ENCODE measurements at regions of chr20 and their contacts with region 1.

Region 1: DNA sequence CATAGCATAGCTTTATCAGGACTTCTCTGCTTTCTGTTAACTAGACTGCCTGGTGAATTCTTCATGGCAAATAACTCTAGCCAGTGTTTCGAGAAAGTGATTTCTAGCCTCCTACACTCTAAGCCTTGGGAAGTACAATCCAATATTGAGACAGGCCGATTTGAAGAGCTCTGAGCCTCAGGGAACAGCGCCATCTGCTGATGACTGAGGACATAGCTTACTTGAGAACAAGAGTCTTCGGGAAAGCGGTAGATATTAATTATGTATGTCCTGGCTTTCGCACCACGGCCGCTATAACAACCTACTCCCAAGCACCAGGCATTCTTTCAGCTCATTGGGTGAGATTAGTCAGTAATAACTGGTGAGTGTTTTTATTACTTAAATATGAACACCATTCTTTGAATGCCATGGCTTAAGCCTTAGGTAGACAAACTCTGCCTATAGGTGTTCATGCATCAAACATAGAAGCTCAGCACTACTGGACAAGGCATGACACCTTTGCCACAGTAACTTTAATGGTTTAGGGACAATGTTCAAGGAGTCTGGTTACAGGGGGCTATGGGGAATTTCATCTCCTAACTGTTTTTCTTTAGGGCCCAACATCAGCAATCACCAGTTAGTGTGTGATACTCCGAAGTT is 518.6 kb downstream of the BMP2 start:
- DNase-seq: peak; percentile 12
- ATAC-seq: peak; percentile 96
- H3K4me3 ChIP-seq: no peak overlapping the region
- H3K27ac ChIP-seq: no peak overlapping the region
- H3K4me1 ChIP-seq: no peaks in the 10 kb centered on the region
- H3K27me3 ChIP-seq: no peaks in the 10 kb centered on the region
- CTCF ChIP-seq: peak; percentile 66 to 83 (median 74)
- EP300 ChIP-seq: no peak
- POLR2A ChIP-seq: no peak
- RAD21 ChIP-seq: peak; percentile 72

Region 2: GRCh38 chr20:6636209-6637159 is 649.6 kb before region 1 on chr20:
- CTCF ChIA-PET with region 1: interaction called, 12 read pairs
- POLR2A ChIA-PET with region 1: no interaction called
- RAD21 ChIA-PET with region 1: no interaction called
- SMC1A ChIA-PET with region 1: interaction called, 8 read pairs
- in situ Hi-C with region 1: no loop called
- intact Hi-C with region 1: no loop called
- DNase-seq: no peak
- ATAC-seq: peak; percentile 73
- H3K4me3 ChIP-seq: no peak overlapping the region
- H3K27ac ChIP-seq: no peak overlapping the region
- H3K4me1 ChIP-seq: no peaks in the 10 kb centered on the region
- H3K27me3 ChIP-seq: no peaks in the 10 kb centered on the region
- CTCF ChIP-seq: peak; percentile 24 to 54 (median 25); a peak in 3 of 6 replicates
- EP300 ChIP-seq: no peak
- POLR2A ChIP-seq: no peak
- RAD21 ChIP-seq: peak; percentile 36

Region 3: DNA sequence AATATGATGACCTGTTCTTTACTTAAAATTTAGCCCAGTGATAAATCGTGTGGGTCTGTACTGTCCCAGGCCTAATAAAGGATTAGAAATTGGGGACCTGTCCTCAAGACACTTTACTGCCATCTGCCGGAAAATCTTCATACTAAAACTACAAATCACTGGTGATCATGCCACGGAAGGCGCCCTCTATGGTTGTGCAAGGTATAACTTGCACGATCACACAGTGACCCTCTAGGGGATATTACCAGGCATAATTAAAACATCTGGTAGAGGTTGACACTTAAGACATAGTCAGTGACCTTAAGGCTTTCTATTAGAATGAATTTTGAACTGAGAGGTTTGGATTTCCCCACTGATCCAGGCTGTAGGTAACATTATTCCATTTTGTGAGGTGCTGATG is 346.0 kb before region 1 on chr20:
- CTCF ChIA-PET with region 1: interaction called, 6 read pairs
- POLR2A ChIA-PET with region 1: no interaction called
- RAD21 ChIA-PET with region 1: interaction called, 10 read pairs
- SMC1A ChIA-PET with region 1: interaction called, 8 read pairs
- in situ Hi-C with region 1: no loop called
- intact Hi-C with region 1: no loop called
- DNase-seq: no peak
- ATAC-seq: peak; percentile 80
- H3K4me3 ChIP-seq: no peak overlapping the region
- H3K27ac ChIP-seq: no peak overlapping the region
- H3K4me1 ChIP-seq: no peaks in the 10 kb centered on the region
- H3K27me3 ChIP-seq: no peaks in the 10 kb centered on the region
- CTCF ChIP-seq: peak; percentile 16 to 61 (median 28); a peak in 4 of 6 replicates
- EP300 ChIP-seq: no peak
- POLR2A ChIP-seq: no peak
- RAD21 ChIP-seq: peak; percentile 16; the same call in 1 of the 2 replicates

Region 4: DNA sequence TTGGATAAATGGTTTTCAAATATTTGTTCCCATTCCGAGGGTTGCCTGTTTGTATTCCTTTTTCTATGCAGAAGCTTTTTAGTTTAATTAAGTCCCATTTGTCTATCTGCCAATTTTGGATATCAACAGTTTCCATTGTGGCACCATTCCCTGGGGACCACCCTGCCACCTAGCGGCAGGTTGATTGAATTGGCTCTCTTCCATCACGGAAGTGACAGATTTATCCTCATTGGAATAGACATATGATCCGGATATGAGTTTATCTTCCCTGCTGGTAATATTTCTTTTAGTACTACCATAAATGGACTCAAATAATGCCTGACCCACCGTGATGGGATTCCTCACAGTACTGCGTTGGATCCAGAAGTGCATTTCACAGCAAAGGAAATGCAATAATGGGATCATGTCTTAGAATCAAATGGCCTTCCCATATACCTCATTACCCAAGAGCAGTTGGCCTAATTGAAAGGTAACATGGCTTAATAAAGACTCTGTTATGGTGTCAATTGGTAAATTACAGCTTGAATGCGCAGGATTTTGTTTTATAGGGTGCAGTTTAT is 191.5 kb before region 1 on chr20:
- CTCF ChIA-PET with region 1: interaction called, 12 read pairs
- POLR2A ChIA-PET with region 1: no interaction called
- RAD21 ChIA-PET with region 1: interaction called, 4 read pairs
- SMC1A ChIA-PET with region 1: interaction called, 4 read pairs
- in situ Hi-C with region 1: no loop called
- intact Hi-C with region 1: no loop called
- DNase-seq: no peak
- ATAC-seq: peak; percentile 43; the same call in 1 of the 3 replicates
- H3K4me3 ChIP-seq: no peak overlapping the region
- H3K27ac ChIP-seq: no peak overlapping the region
- H3K4me1 ChIP-seq: no peaks in the 10 kb centered on the region
- H3K27me3 ChIP-seq: no peaks in the 10 kb centered on the region
- CTCF ChIP-seq: peak; percentile 45 to 75 (median 62)
- EP300 ChIP-seq: no peak
- POLR2A ChIP-seq: no peak
- RAD21 ChIP-seq: peak; percentile 43

Region 5: GRCh38 chr20:7264137-7264536 is 21.9 kb before region 1 on chr20:
- CTCF ChIA-PET with region 1: interaction called, 11 read pairs
- POLR2A ChIA-PET with region 1: no interaction called
- RAD21 ChIA-PET with region 1: interaction called, 5 read pairs
- SMC1A ChIA-PET with region 1: interaction called, 3 read pairs
- in situ Hi-C with region 1: no loop called
- intact Hi-C with region 1: no loop called
- DNase-seq: no peak
- ATAC-seq: no peak
- H3K4me3 ChIP-seq: no peak overlapping the region
- H3K27ac ChIP-seq: no peak overlapping the region
- H3K4me1 ChIP-seq: no peaks in the 10 kb centered on the region
- H3K27me3 ChIP-seq: no peaks in the 10 kb centered on the region
- CTCF ChIP-seq: no peak
- EP300 ChIP-seq: no peak
- POLR2A ChIP-seq: no peak
- RAD21 ChIP-seq: no peak

Region 6: GRCh38 chr20:7859356-7859802 is 573.3 kb after region 1 on chr20:
- CTCF ChIA-PET with region 1: interaction called, 3 read pairs
- POLR2A ChIA-PET with region 1: no interaction called
- RAD21 ChIA-PET with region 1: no interaction called
- SMC1A ChIA-PET with region 1: no interaction called
- in situ Hi-C with region 1: no loop called
- intact Hi-C with region 1: loop called (anchors 1 kb)
- DNase-seq: peak; percentile 8
- ATAC-seq: peak; percentile 68
- H3K4me3 ChIP-seq: no peak overlapping the region
- H3K27ac ChIP-seq: no peak overlapping the region
- H3K4me1 ChIP-seq: no peaks in the 10 kb centered on the region
- H3K27me3 ChIP-seq: no peaks in the 10 kb centered on the region
- CTCF ChIP-seq: peak; percentile 50 to 66 (median 51); a peak in 5 of 6 replicates
- EP300 ChIP-seq: no peak
- POLR2A ChIP-seq: no peak
- RAD21 ChIP-seq: peak; percentile 93